ENCODE measurements at regions of chr2 and their contacts with region 1.

Region 1: DNA sequence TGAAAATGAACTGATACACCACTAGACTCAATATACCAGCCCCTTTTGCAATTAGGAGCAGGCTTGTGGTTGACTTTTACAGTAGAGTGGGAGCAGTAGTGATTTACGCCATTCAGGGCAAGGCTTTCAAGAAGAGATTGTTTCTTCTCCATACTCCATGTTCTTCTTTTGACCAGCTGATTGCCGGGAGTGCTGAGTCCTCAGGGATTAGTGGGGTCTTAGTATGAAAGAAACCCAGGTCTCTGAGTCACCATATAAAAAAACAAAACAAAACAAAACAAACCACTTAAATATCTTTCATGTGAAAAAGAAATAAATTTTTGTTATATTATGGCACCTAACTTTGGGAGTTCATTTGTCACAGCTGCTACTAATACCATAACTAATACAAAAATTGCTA is 465.6 kb upstream of the TRIB2 start:
- DNase-seq: no peak
- ATAC-seq: no peak
- H3K4me3 ChIP-seq: no peak overlapping the region
- H3K27ac ChIP-seq: no peak overlapping the region
- H3K4me1 ChIP-seq: peaks cover 0 to 9% (median 0%) of the 10 kb centered on the region in 12 donors
- H3K27me3 ChIP-seq: no peaks in the 10 kb centered on the region
- CTCF ChIP-seq: no peak
- POLR2A ChIP-seq: no peak

Region 2: DNA sequence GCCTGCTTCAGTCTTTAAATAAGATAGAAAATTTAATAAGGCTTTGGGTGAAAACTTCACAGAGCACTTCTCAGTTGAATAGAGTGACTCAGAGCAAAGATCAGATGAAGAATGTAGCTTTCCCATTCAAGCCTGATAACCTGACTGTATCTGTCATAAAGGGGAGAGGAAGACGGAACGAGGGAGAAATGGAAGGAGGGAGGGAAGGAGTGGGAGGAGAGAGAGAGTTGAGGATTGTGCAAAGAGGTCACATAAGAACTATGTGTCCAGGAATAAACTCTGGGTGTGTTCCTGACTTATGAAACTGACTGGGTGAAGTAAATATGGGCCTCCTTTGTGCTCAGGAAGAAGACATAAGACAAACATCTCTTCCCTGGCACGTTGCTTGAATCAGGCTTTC is 119.1 kb before region 1 on chr2:
- intact Hi-C with region 1: no loop called
- DNase-seq: no peak
- ATAC-seq: peak in 2 of 4 donors; percentile 60 to 63
- H3K4me3 ChIP-seq: no peak overlapping the region
- H3K27ac ChIP-seq: no peak overlapping the region
- H3K4me1 ChIP-seq: no peaks in the 10 kb centered on the region
- H3K27me3 ChIP-seq: no peaks in the 10 kb centered on the region
- CTCF ChIP-seq: no peak
- POLR2A ChIP-seq: no peak

Region 3: DNA sequence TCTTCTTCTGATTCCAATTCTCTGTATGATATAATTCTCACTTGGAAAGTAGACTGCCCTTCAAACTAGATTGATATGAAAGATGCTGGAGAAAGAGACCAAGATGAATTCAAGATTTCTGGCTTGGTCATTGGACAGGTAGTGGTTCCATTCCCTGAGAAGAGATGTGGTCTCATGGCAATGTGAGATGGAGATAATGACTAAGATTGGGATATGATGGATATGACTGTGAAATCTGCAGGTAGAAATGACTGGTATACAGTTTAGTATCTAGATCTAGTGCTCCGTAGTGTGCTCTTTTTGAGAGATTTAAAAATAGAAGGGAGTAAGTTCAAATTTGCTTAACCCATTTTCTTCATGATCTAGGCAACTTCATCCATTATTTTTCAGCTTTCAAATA is 40.2 kb after region 1 on chr2:
- intact Hi-C with region 1: loop called in 1 of 10 experiments (anchors 2 kb)
- DNase-seq: no peak
- ATAC-seq: no peak
- H3K4me3 ChIP-seq: no peak overlapping the region
- H3K27ac ChIP-seq: no peak overlapping the region
- H3K4me1 ChIP-seq: peaks cover 0 to 17% (median 8%) of the 10 kb centered on the region in 12 donors
- H3K27me3 ChIP-seq: no peaks in the 10 kb centered on the region
- CTCF ChIP-seq: no peak
- POLR2A ChIP-seq: no peak

Region 4: DNA sequence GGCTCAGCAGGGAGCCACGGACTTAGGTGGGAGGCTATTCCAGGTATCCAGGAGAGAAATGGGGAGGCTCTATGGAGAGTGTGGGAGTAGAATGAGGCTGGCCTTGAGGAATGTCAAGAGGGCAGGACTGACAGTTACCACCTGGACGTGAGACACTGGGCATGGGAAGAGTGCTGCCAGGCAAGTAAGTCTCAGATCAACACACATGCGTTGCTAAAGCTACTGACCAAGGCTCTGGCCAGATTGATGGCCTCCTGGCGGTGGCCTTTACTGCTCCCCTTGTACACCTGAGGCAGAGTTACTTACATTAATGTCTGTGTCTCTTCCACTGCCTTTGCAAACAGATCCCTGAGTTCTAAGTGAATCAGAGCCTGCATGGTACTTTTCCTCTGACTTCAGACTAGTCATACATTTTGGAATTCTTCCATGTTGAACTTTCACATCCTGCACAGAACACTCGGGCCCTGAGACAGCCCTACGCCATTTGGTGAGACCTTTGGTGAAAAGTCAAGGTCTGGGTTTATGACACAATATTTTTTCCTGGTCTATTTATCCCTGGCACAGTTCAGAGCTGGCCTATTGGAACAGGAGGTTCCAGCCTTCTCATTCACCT is 66.8 kb after region 1 on chr2:
- intact Hi-C with region 1: no loop called
- DNase-seq: no peak
- ATAC-seq: peak in 2 of 4 donors; percentile 21 to 49
- H3K4me3 ChIP-seq: no peak overlapping the region
- H3K27ac ChIP-seq: peak overlapping the region in 2 of 12 donors; percentile 37 to 72
- H3K4me1 ChIP-seq: peaks cover 0 to 42% (median 12%) of the 10 kb centered on the region in 12 donors
- H3K27me3 ChIP-seq: no peaks in the 10 kb centered on the region
- CTCF ChIP-seq: no peak
- POLR2A ChIP-seq: no peak

Measured in heart left ventricle (tissue), 16 donors.